Activated B cell treated with CpG ODN at 0.5 μM for 24 hours (primary cell): ENCODE measurements at regions of chr2 and their contacts with region 1.

Region 1: GRCh38 chr2:86105252-86105968 is at the start of gene POLR1A:
- DNase-seq: peak; percentile 70
- ATAC-seq: peak; percentile 78
- H3K4me3 Mint-ChIP-seq: peak within 1 kb of the TSS; percentile 99
- H3K27ac Mint-ChIP-seq: peak within 1 kb of the TSS; percentile 100
- H3K4me1 Mint-ChIP-seq: peaks cover 53% of the 10 kb centered on the region
- H3K27me3 Mint-ChIP-seq: no peaks in the 10 kb centered on the region
- CTCF ChIP-seq: no peak
- total RNA-seq, gene POLR1A: 47.8 and 53.4 TPM in 2 replicates

Region 2: GRCh38 chr2:85619617-85620016 is 485.8 kb before region 1 on chr2:
- CTCF ChIA-PET with region 1: no interaction called
- POLR2A ChIA-PET with region 1: no interaction called
- intact Hi-C with region 1: loop called (anchors 5 kb)
- DNase-seq: no peak
- ATAC-seq: no peak
- H3K4me3 Mint-ChIP-seq: no peak overlapping the region
- H3K27ac Mint-ChIP-seq: no peak overlapping the region
- H3K4me1 Mint-ChIP-seq: peaks cover 29% of the 10 kb centered on the region
- H3K27me3 Mint-ChIP-seq: no peaks in the 10 kb centered on the region
- CTCF ChIP-seq: no peak

Region 3: GRCh38 chr2:85852937-85853498 is 252.4 kb before region 1 on chr2:
- CTCF ChIA-PET with region 1: no interaction called
- POLR2A ChIA-PET with region 1: interaction called, 4 read pairs
- intact Hi-C with region 1: loop called (anchors 1 kb)
- DNase-seq: peak; percentile 29
- ATAC-seq: peak; percentile 76
- H3K4me3 Mint-ChIP-seq: peak overlapping the region; percentile 79
- H3K27ac Mint-ChIP-seq: peak overlapping the region; percentile 99
- H3K4me1 Mint-ChIP-seq: peaks cover 79% of the 10 kb centered on the region
- H3K27me3 Mint-ChIP-seq: no peaks in the 10 kb centered on the region
- CTCF ChIP-seq: no peak

Region 4: DNA sequence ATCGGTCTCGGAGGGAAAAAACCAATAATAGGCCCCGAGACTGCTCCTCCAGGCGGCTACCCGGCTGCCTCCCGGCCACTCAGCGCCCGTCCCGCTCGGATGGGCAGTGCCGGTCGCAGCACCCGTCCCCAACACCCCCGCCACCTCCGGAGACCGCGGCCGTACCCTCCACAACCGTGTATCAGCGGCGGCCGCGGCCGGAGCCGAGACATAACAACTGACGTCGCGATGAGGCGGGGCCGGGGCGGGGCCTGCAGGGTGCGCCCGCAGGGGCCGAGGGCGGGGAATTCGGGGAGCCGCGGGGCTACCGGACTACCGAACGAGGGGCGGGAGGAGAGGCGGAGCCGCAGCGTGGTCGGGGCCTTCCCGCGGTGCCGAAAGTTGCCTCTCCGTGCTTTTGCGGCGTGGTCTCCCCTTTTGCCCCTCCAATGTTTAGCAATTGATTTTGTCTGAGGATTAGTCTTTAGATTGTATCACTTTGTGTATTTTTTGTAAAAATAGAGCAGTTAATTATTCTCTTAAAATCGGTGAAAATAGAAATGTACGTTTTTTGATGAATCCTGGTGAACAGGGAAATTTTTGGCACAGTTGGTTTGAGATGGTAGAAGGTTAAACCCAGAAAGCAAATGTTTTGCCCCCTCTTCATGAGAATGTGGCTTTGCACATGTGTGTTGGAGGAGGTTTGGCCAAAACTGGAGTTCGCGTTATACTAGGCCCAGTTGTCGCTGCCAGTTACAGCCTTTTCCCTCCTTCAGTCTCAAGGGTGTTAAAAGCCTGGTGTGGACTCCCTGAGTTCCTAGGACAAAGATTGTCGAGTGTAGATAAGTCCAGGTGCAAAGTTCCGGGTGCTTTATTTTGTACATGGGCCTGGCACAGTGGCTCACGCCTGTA is 518.5 kb after region 1 on chr2 and contains the start of gene RNF103:
- CTCF ChIA-PET with region 1: no interaction called
- POLR2A ChIA-PET with region 1: no interaction called
- intact Hi-C with region 1: loop called (anchors 5 kb)
- DNase-seq: peak; percentile 98
- ATAC-seq: peak; percentile 86
- H3K4me3 Mint-ChIP-seq: peak within 1 kb of the TSS; percentile 94
- H3K27ac Mint-ChIP-seq: peak within 1 kb of the TSS; percentile 96
- H3K4me1 Mint-ChIP-seq: peaks cover 35% of the 10 kb centered on the region
- H3K27me3 Mint-ChIP-seq: no peaks in the 10 kb centered on the region
- CTCF ChIP-seq: no peak
- total RNA-seq, gene RNF103: 18.6 and 22.2 TPM in 2 replicates